SK-N-SH (cell line): ENCODE measurements at regions of chr21 and their contacts with region 1.

Region 1: DNA sequence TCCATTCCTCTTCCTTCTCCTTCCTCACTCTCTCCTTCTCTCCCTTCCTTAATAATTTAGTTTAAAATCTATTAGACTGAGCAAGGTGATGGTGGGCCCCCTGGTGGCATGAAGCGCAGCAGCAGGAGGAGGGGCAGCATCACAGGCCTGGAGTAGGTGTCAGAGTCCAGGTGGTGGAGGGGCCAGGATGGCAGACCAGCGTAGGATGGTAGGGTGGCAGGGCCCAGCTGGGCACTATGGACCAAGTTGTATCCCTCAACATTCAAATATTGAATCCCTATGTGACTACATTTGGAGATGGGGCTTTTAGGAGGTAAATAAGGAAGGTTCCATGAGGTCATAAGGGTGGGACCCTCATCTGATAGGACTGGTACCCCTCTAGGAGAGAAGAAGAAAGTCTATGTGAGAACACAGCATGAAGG is 61.0 kb downstream of the WDR4 start:
- DNase-seq: peak; percentile 58
- H3K4me3 ChIP-seq: no peak overlapping the region
- H3K27ac ChIP-seq: no peak overlapping the region
- H3K4me1 ChIP-seq: no peaks in the 10 kb centered on the region
- H3K27me3 ChIP-seq: no peaks in the 10 kb centered on the region
- CTCF ChIP-seq: peak; percentile 56
- EP300 ChIP-seq: no peak
- RAD21 ChIP-seq: peak; percentile 71

Region 2: GRCh38 chr21:42781150-42781970 is 37.0 kb before region 1 on chr21:
- CTCF ChIA-PET with region 1: interaction called, 13 read pairs
- POLR2A ChIA-PET with region 1: interaction called, 3 read pairs
- DNase-seq: peak; percentile 83
- H3K4me3 ChIP-seq: peak overlapping the region in 1 of 2 experiments; percentile 30; a peak in 1 of 4 replicates
- H3K27ac ChIP-seq: peak overlapping the region in 1 of 2 experiments; percentile 87; a peak in 2 of 4 replicates
- H3K4me1 ChIP-seq: peaks cover 0 to 26% of the 10 kb centered on the region in 2 experiments; a peak in 1 of 4 replicates
- H3K27me3 ChIP-seq: no peaks in the 10 kb centered on the region; the same call in 1 of the 2 replicates
- CTCF ChIP-seq: no peak
- EP300 ChIP-seq: peak in 1 of 2 experiments; percentile 46; a peak in 1 of 4 replicates
- RAD21 ChIP-seq: 0 out of 2 replicates have a peak, but pooled peaks have one; percentile 16

Region 3: GRCh38 chr21:42806509-42807140 is 11.7 kb before region 1 on chr21:
- CTCF ChIA-PET with region 1: interaction called, 10 read pairs
- POLR2A ChIA-PET with region 1: no interaction called
- DNase-seq: no peak
- H3K4me3 ChIP-seq: no peak overlapping the region
- H3K27ac ChIP-seq: no peak overlapping the region
- H3K4me1 ChIP-seq: no peaks in the 10 kb centered on the region
- H3K27me3 ChIP-seq: no peaks in the 10 kb centered on the region; the same call in 1 of the 2 replicates
- CTCF ChIP-seq: no peak
- EP300 ChIP-seq: no peak
- RAD21 ChIP-seq: no peak